ENCODE measurements at regions of chr11 and their contacts with region 1.

Region 1: DNA sequence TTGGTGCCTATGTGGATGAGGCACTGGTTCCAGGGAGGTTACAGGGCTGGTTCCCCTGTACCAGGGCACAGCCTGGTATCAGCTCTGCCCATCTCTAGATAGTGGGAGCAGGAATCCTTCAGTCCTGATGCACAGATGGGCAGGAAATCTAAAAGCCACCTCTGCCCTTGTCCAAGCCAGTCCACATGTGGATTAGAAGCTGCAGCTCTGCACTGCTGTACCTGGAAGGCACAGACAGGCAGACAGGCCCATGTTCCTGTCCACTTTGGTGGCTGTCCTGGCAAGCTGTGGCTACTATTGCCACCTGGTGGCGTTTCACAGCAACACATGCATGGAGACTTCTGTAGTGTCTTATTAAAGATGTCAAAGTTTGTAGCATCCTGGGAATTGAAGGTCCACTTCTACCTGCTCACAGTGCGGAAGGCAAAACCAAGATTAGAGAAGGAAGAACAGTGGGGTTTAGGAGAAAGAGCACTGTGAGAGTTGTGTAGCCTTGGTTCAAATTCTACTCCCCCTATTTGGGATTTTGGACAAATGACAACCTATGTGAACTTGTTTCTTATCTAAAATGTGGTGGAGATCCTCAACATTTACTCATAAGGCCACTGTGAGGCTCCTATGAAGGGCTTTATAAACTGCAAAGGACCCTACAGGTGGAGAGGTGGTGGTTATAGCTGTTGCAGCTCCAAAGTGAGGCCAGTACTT is 30.1 kb downstream of the NAV2 start:
- DNase-seq: peak; percentile 79
- H3K4me3 ChIP-seq: no peak overlapping the region
- H3K27ac ChIP-seq: no peak overlapping the region
- H3K4me1 ChIP-seq: peaks cover 20% of the 10 kb centered on the region
- H3K27me3 ChIP-seq: no peaks in the 10 kb centered on the region

Region 2: GRCh38 chr11:19301361-19301760 is 441.4 kb before region 1 on chr11:
- in situ Hi-C with region 1: no loop called
- DNase-seq: peak; percentile 45
- H3K4me3 ChIP-seq: no peak overlapping the region
- H3K27ac ChIP-seq: no peak overlapping the region
- H3K4me1 ChIP-seq: 0 out of 2 replicates have a peak, but pooled peaks cover 10% of the 10 kb centered on the region
- H3K27me3 ChIP-seq: peaks cover 28% of the 10 kb centered on the region

Region 3: DNA sequence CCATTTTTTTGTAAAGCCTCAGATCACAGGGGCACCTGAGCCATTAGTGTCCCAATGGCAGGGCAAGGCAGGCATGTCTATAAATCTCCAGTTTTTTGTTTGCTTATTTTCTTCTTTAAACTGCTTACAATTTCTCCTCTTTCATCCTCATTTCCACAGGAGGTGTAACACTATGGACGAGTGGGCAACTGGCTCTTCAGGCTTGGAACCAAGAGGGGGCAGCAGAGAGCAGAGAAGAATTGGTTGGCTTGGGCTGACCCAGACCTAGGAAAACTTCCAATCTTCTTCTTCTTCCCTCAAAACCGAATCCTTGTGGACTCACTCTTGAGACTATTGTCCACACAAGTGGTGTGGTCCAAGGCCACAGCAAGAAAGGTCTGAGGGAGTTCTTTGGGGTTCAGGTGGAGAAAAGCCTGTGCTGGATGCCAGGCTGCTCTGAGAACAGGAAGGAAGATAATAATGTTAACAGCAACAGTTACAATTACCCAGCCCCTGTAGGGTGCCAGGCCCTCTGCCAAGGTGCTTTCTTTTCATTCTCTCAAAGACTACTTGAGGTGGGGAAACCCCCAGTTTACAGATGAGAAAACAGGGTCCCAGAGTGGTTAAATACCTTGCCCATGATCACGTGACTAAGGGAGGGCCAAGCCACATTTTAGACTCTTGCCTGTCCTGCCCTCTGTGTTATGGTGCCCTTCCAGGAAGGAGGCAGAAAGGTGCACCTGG is 431.3 kb before region 1 on chr11:
- in situ Hi-C with region 1: loop called (anchors 10 kb)
- DNase-seq: peak; percentile 72
- H3K4me3 ChIP-seq: no peak overlapping the region
- H3K27ac ChIP-seq: no peak overlapping the region
- H3K4me1 ChIP-seq: no peaks in the 10 kb centered on the region
- H3K27me3 ChIP-seq: 0 out of 2 replicates have a peak, but pooled peaks cover 10% of the 10 kb centered on the region

Region 4: DNA sequence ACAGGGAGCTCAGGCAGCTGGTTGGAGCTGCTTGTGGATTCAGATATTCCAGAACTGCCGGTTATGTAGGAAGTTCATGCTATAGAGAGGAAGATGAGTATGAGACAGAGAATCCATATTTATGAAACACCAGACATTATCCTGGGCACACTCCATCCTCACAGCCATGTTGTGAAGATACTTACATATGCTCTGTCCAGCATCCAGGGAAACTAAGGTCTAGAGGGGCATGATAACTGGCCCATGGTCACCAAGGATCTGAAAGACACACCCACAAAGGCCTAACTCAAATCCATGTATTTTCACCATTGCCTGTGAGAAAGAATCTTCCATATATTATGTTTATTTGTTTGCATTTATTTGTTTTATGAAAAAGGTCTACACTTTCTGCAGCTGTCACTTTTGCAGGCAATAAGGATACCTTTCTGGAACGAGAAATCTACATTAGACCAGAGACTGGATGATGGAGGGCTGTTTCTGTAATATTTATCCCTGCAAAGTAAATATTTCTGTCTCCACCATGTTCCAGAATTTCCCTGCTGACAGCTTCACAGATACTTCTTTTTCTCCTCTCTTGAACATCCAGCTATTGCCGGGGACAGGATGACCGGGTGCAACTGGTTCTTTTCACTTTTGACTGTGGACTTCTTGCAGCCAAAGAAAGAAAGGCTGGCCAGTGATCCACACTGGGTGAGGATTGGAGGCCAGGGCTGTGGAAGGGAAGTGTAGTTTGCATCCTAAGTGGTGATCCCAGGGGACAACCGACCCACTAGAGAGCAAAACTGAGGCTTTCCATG is 176.0 kb before region 1 on chr11:
- in situ Hi-C with region 1: loop called (anchors 5 kb)
- DNase-seq: no peak
- H3K4me3 ChIP-seq: no peak overlapping the region
- H3K27ac ChIP-seq: no peak overlapping the region
- H3K4me1 ChIP-seq: peaks cover 7% of the 10 kb centered on the region; the same call in 1 of the 2 replicates
- H3K27me3 ChIP-seq: no peaks in the 10 kb centered on the region

Region 5: DNA sequence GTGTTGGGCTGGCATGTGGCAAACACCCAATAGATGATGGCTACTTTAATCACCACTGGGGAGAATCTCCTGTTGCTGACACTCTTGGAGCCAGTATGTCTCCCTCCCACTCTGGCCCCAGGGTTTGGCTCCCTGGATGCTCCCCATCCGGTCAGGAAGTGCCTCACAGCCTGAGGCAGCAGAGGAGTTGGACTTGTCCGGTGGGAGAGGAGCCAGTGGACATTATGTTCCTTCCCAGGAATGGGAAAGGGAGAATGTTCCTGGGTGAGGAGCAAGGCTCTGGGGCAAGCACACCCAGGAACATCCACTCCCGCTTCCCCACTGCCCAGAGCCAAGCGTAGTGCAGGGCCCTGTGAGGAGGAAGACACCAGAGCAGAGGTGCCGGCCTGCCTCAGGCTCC is 114.7 kb before region 1 on chr11:
- in situ Hi-C with region 1: no loop called
- DNase-seq: peak; percentile 98
- H3K4me3 ChIP-seq: no peak overlapping the region
- H3K27ac ChIP-seq: peak overlapping the region; percentile 86
- H3K4me1 ChIP-seq: peaks cover 37% of the 10 kb centered on the region
- H3K27me3 ChIP-seq: no peaks in the 10 kb centered on the region

Region 6: DNA sequence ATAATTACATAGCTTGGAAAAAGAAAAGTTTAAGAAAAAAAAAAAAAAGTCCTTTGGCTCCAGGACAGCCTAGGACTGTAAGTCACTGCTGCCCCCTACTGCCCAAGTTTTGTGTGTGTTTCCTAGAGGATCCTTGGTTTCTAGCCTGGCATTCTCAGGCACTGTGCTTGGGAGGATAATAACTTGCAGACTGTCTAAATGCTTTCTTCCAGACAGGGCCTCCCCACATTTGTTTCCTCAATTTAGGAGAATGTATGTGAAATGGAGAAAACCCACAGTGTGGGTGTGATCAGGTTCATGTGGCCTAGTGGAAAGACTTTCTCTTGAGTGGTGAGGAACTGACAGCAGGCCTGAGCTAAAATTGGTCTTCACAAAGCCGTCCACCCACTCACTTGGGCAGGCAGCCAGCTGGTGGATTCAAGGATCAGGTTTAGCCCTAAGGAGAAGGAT is 160.9 kb after region 1 on chr11:
- in situ Hi-C with region 1: loop called (anchors 10 kb)
- DNase-seq: peak; percentile 84
- H3K4me3 ChIP-seq: no peak overlapping the region
- H3K27ac ChIP-seq: no peak overlapping the region
- H3K4me1 ChIP-seq: 0 out of 2 replicates have a peak, but pooled peaks cover 3% of the 10 kb centered on the region
- H3K27me3 ChIP-seq: no peaks in the 10 kb centered on the region